PC-9 (cell line): ENCODE measurements at regions of chr17 and their contacts with region 1.

Region 1: GRCh38 chr17:82859431-82860403 is 19.9 kb upstream of the ZNF750 start:
- DNase-seq: peak; percentile 88 to 93
- H3K4me3 ChIP-seq: peak overlapping the region; percentile 40; the same call in 1 of the 2 replicates
- H3K27ac ChIP-seq: peak overlapping the region; percentile 99
- H3K4me1 ChIP-seq: peaks cover 52% of the 10 kb centered on the region
- H3K27me3 ChIP-seq: no peaks in the 10 kb centered on the region
- CTCF ChIP-seq: no peak

Region 2: DNA sequence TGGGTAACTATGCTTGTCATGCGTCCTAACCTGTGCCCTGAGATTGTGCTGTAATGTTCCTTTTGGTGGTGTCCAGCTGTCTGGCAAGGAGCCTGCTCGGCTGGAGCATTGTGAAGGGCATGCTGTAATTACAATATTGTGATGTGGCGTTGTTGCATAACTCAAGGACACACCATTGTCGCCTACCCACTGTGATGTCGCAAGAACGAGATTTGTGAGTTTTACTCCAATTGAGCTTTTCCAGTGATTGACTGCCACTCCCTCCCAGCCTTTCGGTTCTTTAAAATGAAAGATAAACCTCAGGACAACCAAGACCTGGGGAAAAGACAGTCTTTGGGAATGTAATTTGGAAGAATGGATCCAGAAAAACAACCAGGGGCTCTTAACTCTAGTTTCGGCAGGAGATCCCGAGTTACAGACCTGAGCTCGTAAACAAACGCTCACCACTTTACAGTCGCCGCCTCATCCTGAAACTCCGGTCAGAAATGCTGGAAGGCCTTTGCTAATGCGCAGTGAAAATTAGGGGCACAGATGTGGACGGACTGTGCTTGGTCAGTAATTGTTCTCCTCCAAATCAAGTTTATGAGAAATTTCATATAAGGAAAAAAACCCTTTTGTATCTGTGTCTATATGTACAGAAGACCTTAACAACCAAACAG is 21.2 kb before region 1 on chr17:
- CTCF ChIA-PET with region 1: interaction called, 3 read pairs
- POLR2A ChIA-PET with region 1: interaction called, 3 read pairs
- intact Hi-C with region 1: loop called (anchors 1 kb)
- DNase-seq: peak; percentile 76 to 90
- H3K4me3 ChIP-seq: peak overlapping the region; percentile 58
- H3K27ac ChIP-seq: peak overlapping the region; percentile 91
- H3K4me1 ChIP-seq: peaks cover 37% of the 10 kb centered on the region
- H3K27me3 ChIP-seq: no peaks in the 10 kb centered on the region
- CTCF ChIP-seq: no peak

Region 3: DNA sequence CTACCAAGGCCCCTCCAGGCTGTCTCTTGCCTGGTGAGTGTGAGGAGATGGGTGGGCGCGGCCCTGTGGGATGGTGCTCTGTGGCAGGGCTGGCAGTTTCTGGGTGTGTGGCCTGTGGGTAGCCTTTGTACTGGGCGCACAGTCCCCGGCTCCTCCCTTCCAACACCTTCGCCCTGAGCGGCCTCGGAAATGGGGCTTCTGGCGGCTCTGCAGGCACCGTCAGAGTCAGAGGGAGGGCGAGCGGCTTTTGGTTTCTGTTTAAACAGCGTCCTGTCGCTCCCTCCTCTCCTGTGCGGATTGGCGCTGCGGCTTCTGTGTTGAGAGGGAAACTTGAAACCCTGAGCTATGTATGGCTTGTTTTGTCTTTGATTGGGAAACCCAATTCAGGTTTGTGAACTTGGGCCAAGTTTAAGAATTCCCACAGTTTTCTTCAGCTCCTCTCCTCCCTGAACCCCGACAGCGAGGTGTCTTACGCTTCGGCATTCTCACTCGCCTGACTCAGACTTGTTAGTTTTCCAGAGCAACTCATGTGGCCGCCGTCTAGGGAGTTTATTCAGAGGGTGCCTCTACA is 11.6 kb before region 1 on chr17:
- CTCF ChIA-PET with region 1: no interaction called
- POLR2A ChIA-PET with region 1: interaction called, 4 read pairs
- intact Hi-C with region 1: loop called (anchors 1 kb)
- DNase-seq: peak; percentile 77 to 89
- H3K4me3 ChIP-seq: peak overlapping the region; percentile 46; the same call in 1 of the 2 replicates
- H3K27ac ChIP-seq: peak overlapping the region; percentile 88
- H3K4me1 ChIP-seq: peaks cover 15% of the 10 kb centered on the region
- H3K27me3 ChIP-seq: no peaks in the 10 kb centered on the region
- CTCF ChIP-seq: no peak

Region 4: DNA sequence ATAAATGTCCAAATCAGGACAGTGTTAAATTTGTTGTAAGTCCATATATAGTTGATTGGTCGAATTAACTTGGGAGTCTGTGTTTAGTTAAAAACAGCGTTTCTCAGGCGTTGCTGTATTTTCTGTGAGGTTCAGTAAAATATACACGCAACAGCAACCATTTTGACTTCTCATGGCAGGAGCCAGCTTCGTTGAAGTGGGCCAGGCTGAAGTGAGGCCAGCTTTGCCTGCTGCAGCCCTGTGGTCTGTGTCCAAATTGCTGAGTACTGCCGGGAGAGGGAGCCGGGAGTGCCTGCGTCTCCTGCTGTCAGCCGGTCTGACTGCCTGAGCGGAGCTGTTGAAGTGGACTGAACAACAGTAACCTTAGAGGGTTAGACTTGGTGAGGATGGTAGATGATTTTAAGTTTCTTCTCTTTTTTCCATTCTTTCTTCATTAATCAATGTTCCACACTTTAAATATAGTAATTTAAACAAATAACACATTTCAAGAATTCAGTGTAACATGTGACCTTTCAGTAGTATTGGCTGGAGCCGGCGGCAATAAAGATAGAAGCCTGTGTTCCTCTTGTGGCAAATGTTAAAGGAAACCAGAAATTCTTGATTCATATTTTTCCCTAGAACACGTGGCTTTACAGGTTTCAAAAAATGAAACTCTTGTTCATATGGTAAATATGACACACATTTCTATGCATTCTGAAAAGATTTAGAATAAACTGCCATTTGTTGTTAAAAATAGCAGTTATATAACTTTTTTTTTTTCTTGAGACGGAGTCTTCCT is 17.1 kb after region 1 on chr17:
- CTCF ChIA-PET with region 1: interaction called, 6 read pairs
- POLR2A ChIA-PET with region 1: interaction called, 5 read pairs
- intact Hi-C with region 1: loop called (anchors 1 kb)
- DNase-seq: peak; percentile 68 to 70
- H3K4me3 ChIP-seq: peak overlapping the region; percentile 54; the same call in 1 of the 2 replicates
- H3K27ac ChIP-seq: peak overlapping the region; percentile 100
- H3K4me1 ChIP-seq: peaks cover 42% of the 10 kb centered on the region
- H3K27me3 ChIP-seq: no peaks in the 10 kb centered on the region
- CTCF ChIP-seq: no peak; the same call in 1 of the 2 replicates

Region 5: DNA sequence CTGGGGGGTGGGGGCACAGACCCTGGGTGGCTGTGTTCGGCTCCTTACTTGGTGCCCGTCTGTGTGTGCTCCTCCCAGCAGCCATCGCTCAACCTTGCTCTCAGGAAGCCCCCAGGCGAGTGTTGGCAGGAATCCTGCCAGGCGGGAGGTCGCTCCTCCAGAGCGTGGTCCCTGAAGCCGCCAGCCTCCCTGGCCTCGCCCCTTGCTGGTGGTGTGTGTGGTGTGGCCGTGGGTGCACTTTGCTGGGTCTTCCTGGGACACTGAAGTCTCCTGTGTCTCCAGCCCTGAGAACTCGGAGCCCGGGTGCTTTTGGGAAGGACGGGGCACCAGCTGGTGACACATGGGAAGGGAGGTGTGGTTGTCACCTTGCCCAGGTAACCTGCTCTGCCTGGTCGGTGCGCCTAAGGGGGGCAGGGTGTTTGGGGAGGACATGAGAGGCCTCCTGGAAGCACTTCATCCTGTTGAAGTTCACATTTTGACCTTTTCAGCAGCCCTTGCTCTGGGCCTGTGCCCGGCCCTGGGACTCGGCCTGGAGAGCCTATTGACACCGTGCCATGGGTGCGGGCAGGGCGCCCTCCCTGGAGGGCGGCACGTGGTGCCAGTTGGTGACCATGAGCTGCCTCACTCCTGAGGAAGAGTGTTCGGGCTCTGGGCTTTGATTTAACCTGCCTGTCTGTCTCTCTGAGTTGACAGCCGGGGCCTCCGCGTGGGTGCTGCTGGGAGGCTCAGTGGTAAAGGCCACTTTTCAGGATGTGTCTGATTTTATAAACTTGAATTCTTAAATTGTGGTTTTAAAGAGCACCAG is 29.2 kb after region 1 on chr17:
- CTCF ChIA-PET with region 1: interaction called, 5 read pairs
- POLR2A ChIA-PET with region 1: interaction called, 9 read pairs
- intact Hi-C with region 1: loop called (anchors 1 kb)
- DNase-seq: peak; percentile 72 to 77
- H3K4me3 ChIP-seq: peak overlapping the region; percentile 47
- H3K27ac ChIP-seq: peak overlapping the region; percentile 100
- H3K4me1 ChIP-seq: peaks cover 59% of the 10 kb centered on the region
- H3K27me3 ChIP-seq: no peaks in the 10 kb centered on the region
- CTCF ChIP-seq: no peak